ENCODE measurements at regions of chr14 and their contacts with region 1.

Region 1: DNA sequence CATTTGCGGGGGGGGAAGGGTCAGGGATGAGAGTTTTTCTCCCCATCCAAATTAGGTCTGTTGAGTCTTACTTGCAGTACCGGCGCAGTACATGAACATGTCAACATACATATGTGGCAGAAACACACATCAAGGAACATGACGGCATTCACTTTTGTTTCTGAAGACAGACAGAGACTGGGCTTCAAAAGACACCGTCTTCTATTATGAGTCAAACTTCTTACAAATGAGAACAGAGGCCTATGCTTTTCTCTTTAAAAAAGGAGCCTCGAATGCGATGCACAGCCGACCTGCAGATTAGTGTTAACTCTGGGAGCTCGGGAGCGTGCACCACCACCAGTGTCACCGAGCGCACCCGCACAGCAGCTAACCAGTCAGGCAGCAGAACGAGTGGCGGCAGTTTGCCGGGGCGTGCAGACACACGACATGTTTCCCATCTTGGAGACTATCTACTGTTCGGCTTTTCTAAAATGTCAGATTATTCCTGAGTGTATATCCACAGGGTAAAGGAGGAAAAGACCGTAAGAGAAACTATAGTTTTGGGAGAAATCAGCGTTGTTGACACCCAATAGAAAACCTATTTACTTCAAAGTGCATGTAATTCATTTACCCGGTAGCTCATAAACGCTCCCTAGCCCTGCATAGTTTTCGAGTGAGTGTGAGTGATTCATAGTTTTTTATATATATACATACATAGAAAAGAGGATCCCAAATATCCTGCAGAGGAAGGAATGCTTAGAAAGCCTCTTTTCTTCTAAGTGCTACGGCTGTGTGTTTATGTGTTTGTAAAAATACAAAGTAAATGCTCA is 33.0 kb downstream of the UBR7 start:
- DNase-seq: no peak
- ATAC-seq: no peak
- H3K4me3 ChIP-seq: no peak overlapping the region
- H3K27ac ChIP-seq: no peak overlapping the region
- H3K4me1 ChIP-seq: no peaks in the 10 kb centered on the region
- H3K27me3 ChIP-seq: 0 out of 5 replicates have a peak, but pooled peaks cover 0 to 2% of the 10 kb centered on the region in 2 experiments
- CTCF ChIP-seq: no peak
- EP300 ChIP-seq: no peak
- POLR2A ChIP-seq: no peak
- RAD21 ChIP-seq: no peak

Region 2: GRCh38 chr14:93337143-93337753 is 97.2 kb after region 1 on chr14:
- CTCF ChIA-PET with region 1: no interaction called
- POLR2A ChIA-PET with region 1: no interaction called
- in situ Hi-C with region 1: no loop called
- intact Hi-C with region 1: no loop called
- DNase-seq: no peak
- ATAC-seq: no peak
- H3K4me3 ChIP-seq: no peak overlapping the region
- H3K27ac ChIP-seq: no peak overlapping the region
- H3K4me1 ChIP-seq: peaks cover 0 to 4% of the 10 kb centered on the region in 2 experiments; a peak in 4 of 5 replicates
- H3K27me3 ChIP-seq: no peaks in the 10 kb centered on the region
- CTCF ChIP-seq: no peak
- EP300 ChIP-seq: no peak
- POLR2A ChIP-seq: no peak
- RAD21 ChIP-seq: no peak

Region 3: GRCh38 chr14:93543766-93544165 is 303.7 kb after region 1 on chr14:
- CTCF ChIA-PET with region 1: no interaction called
- POLR2A ChIA-PET with region 1: no interaction called
- in situ Hi-C with region 1: loop called (anchors 5 kb)
- intact Hi-C with region 1: no loop called
- DNase-seq: peak in 2 of 4 experiments; percentile 4 to 10
- ATAC-seq: no peak
- H3K4me3 ChIP-seq: no peak overlapping the region
- H3K27ac ChIP-seq: no peak overlapping the region
- H3K4me1 ChIP-seq: no peaks in the 10 kb centered on the region
- H3K27me3 ChIP-seq: no peaks in the 10 kb centered on the region
- CTCF ChIP-seq: peak in 2 of 3 experiments; percentile 11 to 49; a peak in 3 of 6 replicates
- EP300 ChIP-seq: no peak
- POLR2A ChIP-seq: no peak
- RAD21 ChIP-seq: peak in 1 of 2 experiments; percentile 57; a peak in 3 of 4 replicates